K562 (cell line): ENCODE measurements at regions of chr2 and their contacts with region 1.

Region 1: GRCh38 chr2:135531231-135532228 is at the start of gene R3HDM1:
- DNase-seq: peak; percentile 96 to 99 (median 98)
- ATAC-seq: peak; percentile 90
- H3K4me3 ChIP-seq: peak within 1 kb of the TSS; percentile 66
- H3K27ac ChIP-seq: peak within 1 kb of the TSS; percentile 97
- H3K4me1 ChIP-seq: peaks cover 0 to 15% of the 10 kb centered on the region in 2 experiments; a peak in 3 of 5 replicates
- H3K27me3 ChIP-seq: no peaks in the 10 kb centered on the region
- CTCF ChIP-seq: peak in 2 of 3 experiments; percentile 29 to 35; a peak in 4 of 6 replicates
- EP300 ChIP-seq: no peak
- POLR2A ChIP-seq: peak; percentile 78
- RAD21 ChIP-seq: peak in 1 of 2 experiments; percentile 37; a peak in 1 of 4 replicates
- polyA plus RNA-seq, gene R3HDM1: 12.4 to 20.8 TPM

Region 2: DNA sequence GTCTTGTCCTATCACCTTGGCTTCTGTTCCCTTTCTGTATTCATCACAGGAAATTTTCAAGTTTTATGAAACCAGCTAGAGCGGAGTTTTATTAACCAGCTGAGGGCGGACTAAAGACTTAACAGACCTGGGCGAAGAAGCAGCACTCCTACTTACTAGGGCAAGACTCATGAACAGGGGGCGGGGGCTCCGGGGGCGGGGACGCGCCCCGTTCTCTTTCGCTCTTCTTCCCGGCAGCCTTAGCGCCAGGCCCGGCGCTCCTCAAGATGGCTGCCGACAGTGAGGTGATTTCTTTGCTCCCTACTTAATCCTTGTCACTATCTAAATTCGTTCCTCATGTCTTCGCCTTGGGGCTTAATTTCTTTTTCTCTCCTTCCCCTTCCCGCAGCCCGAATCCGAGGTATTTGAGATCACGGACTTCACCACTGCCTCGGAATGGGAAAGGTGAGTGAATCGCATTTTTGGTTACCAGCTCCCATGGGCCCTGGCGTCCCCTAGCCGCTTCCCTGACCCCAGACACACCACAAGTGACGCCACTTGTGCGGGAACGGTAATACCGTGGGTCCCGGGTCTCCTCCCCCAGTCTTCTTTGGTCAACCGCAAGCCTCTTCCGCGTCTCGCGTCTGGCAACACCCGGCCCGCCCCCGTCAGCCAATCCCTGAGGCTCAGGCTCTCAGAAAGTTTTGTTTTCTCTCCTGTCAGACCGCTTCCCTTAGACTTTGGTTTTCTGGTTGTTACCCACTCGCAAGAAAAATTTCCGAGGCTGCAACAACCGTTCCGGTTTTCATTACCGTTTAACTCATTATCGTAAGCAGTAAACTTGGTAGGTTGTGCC is 479.3 kb before region 1 on chr2 and contains the start of gene RAB3GAP1:
- CTCF ChIA-PET with region 1: no interaction called
- POLR2A ChIA-PET with region 1: no interaction called
- in situ Hi-C with region 1: no loop called
- intact Hi-C with region 1: loop called (anchors 5 kb)
- DNase-seq: peak; percentile 89 to 92 (median 90)
- ATAC-seq: peak; percentile 90
- H3K4me3 ChIP-seq: peak within 1 kb of the TSS; percentile 56
- H3K27ac ChIP-seq: peak within 1 kb of the TSS; percentile 85
- H3K4me1 ChIP-seq: peaks cover 12 to 19% of the 10 kb centered on the region in 2 experiments; a peak in 4 of 5 replicates
- H3K27me3 ChIP-seq: no peaks in the 10 kb centered on the region
- CTCF ChIP-seq: no peak
- EP300 ChIP-seq: peak; percentile 7; the same call in 1 of the 2 replicates
- POLR2A ChIP-seq: peak; percentile 98
- RAD21 ChIP-seq: 0 out of 4 replicates have a peak, but pooled peaks of 1 of the 2 experiments have one; percentile 8
- polyA plus RNA-seq, gene RAB3GAP1: 15.5 to 35.6 TPM

Region 3: DNA sequence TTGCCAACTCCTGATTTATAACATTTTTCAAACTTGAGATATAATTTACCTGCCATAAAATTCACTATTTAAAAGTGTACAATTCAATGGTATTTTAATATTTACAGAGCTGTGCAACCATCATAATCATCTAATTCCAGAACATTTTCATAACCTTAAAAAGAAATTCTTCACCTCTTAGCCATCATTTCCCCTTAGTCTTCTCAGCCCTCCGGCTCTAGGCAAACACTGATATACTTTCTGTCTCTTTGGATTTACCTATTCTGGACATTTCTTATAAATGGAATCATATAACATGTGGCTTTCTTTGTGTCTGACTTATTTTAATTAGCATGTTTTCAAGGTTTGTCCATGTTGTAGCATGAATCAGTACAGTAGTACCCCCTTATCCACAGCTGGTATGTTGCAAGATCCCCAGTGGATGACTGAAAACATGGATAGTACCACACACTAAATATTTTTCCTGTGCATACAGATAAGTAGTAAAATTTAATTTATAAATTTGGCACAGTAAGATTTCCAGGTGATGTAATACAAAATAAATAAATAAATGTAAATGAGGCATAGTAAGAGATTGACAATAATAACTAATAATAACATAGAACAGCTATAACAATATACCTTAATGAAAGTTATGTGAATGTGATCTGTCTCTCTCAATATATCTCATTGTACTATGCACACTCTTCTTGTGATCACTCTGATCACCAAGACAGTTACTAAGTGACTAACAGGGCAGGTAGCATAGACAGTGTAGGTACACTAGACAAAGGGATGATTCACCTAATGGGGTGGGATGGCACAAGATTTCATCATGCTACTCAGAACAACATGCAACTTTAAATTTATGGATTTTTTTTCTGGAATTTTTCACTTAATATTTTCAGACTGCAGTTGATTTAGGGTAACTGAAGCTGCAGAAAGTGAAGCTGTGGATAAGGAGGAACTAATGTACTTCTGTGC is 406.3 kb before region 1 on chr2:
- CTCF ChIA-PET with region 1: no interaction called
- POLR2A ChIA-PET with region 1: no interaction called
- in situ Hi-C with region 1: no loop called
- intact Hi-C with region 1: no loop called
- DNase-seq: no peak
- ATAC-seq: peak; percentile 51; the same call in 2 of the 3 replicates
- H3K4me3 ChIP-seq: no peak overlapping the region
- H3K27ac ChIP-seq: no peak overlapping the region
- H3K4me1 ChIP-seq: no peaks in the 10 kb centered on the region
- H3K27me3 ChIP-seq: no peaks in the 10 kb centered on the region
- CTCF ChIP-seq: no peak
- EP300 ChIP-seq: no peak
- POLR2A ChIP-seq: no peak
- RAD21 ChIP-seq: no peak

Region 4: DNA sequence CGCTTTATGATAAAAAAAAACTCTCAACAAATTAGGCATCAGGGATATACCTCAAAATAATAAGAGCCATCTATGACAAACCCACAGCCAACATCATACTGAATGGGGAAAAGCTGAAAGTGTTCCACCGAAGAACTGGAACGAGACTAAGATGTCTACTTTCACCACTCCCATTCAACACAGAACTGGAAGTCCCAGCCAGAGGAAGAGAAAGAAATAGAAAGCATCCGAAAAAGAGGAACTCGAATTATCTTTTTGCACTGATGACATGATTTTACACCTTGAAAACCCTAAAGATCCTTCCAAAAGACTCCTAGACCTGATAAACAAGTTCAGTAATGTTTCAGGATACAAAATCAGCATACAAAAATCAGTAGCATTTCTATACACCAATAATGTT is 122.1 kb before region 1 on chr2:
- CTCF ChIA-PET with region 1: no interaction called
- POLR2A ChIA-PET with region 1: no interaction called
- in situ Hi-C with region 1: no loop called
- intact Hi-C with region 1: no loop called
- DNase-seq: no peak
- ATAC-seq: no peak
- H3K4me3 ChIP-seq: no peak overlapping the region
- H3K27ac ChIP-seq: no peak overlapping the region
- H3K4me1 ChIP-seq: no peaks in the 10 kb centered on the region
- H3K27me3 ChIP-seq: no peaks in the 10 kb centered on the region
- CTCF ChIP-seq: no peak
- EP300 ChIP-seq: no peak
- POLR2A ChIP-seq: no peak
- RAD21 ChIP-seq: no peak

Region 5: DNA sequence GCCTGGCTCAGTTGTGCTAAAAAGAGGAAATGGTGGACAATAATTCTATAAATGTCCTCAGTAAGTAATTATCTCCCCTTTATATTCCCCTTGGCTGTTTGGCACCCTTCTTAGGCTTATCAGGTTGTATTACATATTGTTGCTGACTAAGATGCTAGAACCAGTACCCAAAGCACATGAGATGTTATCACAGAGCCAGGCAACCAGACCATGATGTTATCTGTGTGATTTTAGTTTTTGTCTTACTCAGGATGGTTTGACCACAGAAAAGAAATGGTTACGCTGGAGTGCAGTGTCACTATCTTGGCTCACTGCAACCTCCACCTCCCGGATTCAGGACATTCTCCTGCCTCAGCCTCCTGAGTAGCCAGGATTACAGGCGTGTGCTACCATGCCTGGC is 14.9 kb after region 1 on chr2:
- CTCF ChIA-PET with region 1: no interaction called
- POLR2A ChIA-PET with region 1: interaction called, 14 read pairs
- in situ Hi-C with region 1: no loop called
- intact Hi-C with region 1: no loop called
- DNase-seq: no peak
- ATAC-seq: no peak
- H3K4me3 ChIP-seq: no peak overlapping the region
- H3K27ac ChIP-seq: no peak overlapping the region
- H3K4me1 ChIP-seq: no peaks in the 10 kb centered on the region
- H3K27me3 ChIP-seq: no peaks in the 10 kb centered on the region
- CTCF ChIP-seq: no peak
- EP300 ChIP-seq: no peak
- POLR2A ChIP-seq: no peak
- RAD21 ChIP-seq: no peak

Region 6: GRCh38 chr2:135709992-135710391 is 178.5 kb after region 1 on chr2:
- CTCF ChIA-PET with region 1: no interaction called
- POLR2A ChIA-PET with region 1: no interaction called
- in situ Hi-C with region 1: no loop called
- intact Hi-C with region 1: no loop called
- DNase-seq: peak; percentile 60 to 70 (median 66)
- ATAC-seq: peak; percentile 90
- H3K4me3 ChIP-seq: no peak overlapping the region
- H3K27ac ChIP-seq: no peak overlapping the region
- H3K4me1 ChIP-seq: no peaks in the 10 kb centered on the region
- H3K27me3 ChIP-seq: no peaks in the 10 kb centered on the region
- CTCF ChIP-seq: peak; percentile 72 to 92 (median 87)
- EP300 ChIP-seq: no peak
- POLR2A ChIP-seq: no peak
- RAD21 ChIP-seq: peak; percentile 76 to 81

Region 7: GRCh38 chr2:135728064-135728743 is 196.7 kb after region 1 on chr2:
- CTCF ChIA-PET with region 1: no interaction called
- POLR2A ChIA-PET with region 1: no interaction called
- in situ Hi-C with region 1: no loop called
- intact Hi-C with region 1: no loop called
- DNase-seq: peak in 2 of 4 experiments; percentile 13 to 43
- ATAC-seq: peak; percentile 64
- H3K4me3 ChIP-seq: no peak overlapping the region
- H3K27ac ChIP-seq: 0 out of 3 replicates have a peak overlapping the region, but pooled peaks have one; percentile 12
- H3K4me1 ChIP-seq: peaks cover 0 to 3% of the 10 kb centered on the region in 2 experiments; a peak in 3 of 5 replicates
- H3K27me3 ChIP-seq: no peaks in the 10 kb centered on the region
- CTCF ChIP-seq: no peak
- EP300 ChIP-seq: no peak
- POLR2A ChIP-seq: no peak
- RAD21 ChIP-seq: no peak

Region 8: GRCh38 chr2:135741395-135742324 is 210.1 kb after region 1 on chr2 and contains the start of gene UBXN4:
- CTCF ChIA-PET with region 1: no interaction called
- POLR2A ChIA-PET with region 1: no interaction called
- in situ Hi-C with region 1: no loop called
- intact Hi-C with region 1: loop called (anchors 2 kb)
- DNase-seq: peak; percentile 90 to 99 (median 92)
- ATAC-seq: peak; percentile 93
- H3K4me3 ChIP-seq: peak within 1 kb of the TSS; percentile 86
- H3K27ac ChIP-seq: peak within 1 kb of the TSS; percentile 93
- H3K4me1 ChIP-seq: peaks cover 8 to 10% of the 10 kb centered on the region in 2 experiments; a peak in 3 of 5 replicates
- H3K27me3 ChIP-seq: no peaks in the 10 kb centered on the region
- CTCF ChIP-seq: peak; percentile 62 to 88 (median 81)
- EP300 ChIP-seq: no peak
- POLR2A ChIP-seq: peak; percentile 86
- RAD21 ChIP-seq: no peak
- polyA plus RNA-seq, gene UBXN4: 30.4 to 48.1 TPM

Region 9: GRCh38 chr2:135863233-135863632 is 331.7 kb after region 1 on chr2:
- CTCF ChIA-PET with region 1: no interaction called
- POLR2A ChIA-PET with region 1: no interaction called
- in situ Hi-C with region 1: no loop called
- intact Hi-C with region 1: loop called (anchors 10 kb)
- DNase-seq: no peak
- ATAC-seq: no peak
- H3K4me3 ChIP-seq: no peak overlapping the region
- H3K27ac ChIP-seq: no peak overlapping the region
- H3K4me1 ChIP-seq: no peaks in the 10 kb centered on the region
- H3K27me3 ChIP-seq: no peaks in the 10 kb centered on the region
- CTCF ChIP-seq: no peak
- EP300 ChIP-seq: no peak
- POLR2A ChIP-seq: no peak
- RAD21 ChIP-seq: no peak